GM12878 (cell line): ENCODE measurements at regions of chr2 and their contacts with region 1.

Region 1: DNA sequence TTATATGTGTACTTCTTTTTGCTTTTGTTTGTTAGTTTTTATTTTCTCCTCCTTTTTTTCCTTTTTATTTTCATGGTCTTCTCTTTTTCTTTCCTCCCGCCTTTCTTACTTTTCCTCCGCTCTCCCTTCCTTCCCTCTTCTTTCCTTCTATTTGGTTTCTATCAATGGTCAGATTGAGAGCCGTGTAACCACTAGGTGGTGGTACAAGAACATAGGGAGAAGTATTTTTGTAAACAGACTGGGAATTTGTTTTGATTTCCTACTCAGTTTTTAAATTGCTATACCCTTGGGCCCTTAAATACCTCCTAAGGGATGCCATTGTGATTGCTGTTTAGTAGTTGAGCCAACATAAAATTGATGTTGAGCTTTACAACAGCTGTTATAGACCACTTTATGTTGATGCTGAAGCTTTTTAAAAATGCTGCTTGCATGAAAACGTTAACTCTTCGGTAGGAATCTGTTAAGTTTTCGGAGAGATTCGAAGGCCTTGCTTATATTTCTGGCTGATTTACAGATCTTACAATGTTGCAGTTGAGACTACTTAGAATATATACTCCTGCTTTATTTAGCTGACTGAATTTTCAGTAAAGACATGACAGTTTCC is 124.2 kb downstream of the UBE2E3 start:
- DNase-seq: no peak
- ATAC-seq: no peak; the same call in 2 of the 3 replicates
- H3K4me3 ChIP-seq: no peak overlapping the region
- H3K27ac ChIP-seq: peak overlapping the region; percentile 4; the same call in 1 of the 2 replicates
- H3K4me1 ChIP-seq: peaks cover 25% of the 10 kb centered on the region
- H3K27me3 ChIP-seq: no peaks in the 10 kb centered on the region
- CTCF ChIP-seq: peak; percentile 63 to 67 (median 65)
- EP300 ChIP-seq: no peak
- POLR2A ChIP-seq: no peak
- RAD21 ChIP-seq: peak; percentile 100

Region 2: DNA sequence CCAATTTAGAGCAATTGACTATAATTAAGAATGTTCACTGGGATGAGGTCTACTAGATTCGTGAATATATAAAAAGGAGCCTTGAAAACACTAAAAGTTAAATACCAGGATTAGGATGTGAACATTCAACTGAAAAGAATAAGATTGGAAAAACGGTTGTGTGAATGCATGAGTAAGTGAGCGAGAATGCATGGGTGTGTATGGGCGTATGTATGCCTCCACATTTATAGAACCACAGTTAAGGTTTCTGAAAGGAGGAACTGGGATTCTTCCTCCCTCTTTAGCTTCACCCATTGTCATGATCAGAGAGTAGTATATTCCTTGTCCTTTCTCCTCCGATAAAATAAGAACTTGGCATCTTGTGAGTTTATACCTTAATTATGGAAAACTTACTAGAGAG is 275.4 kb before region 1 on chr2:
- CTCF ChIA-PET with region 1: no interaction called
- POLR2A ChIA-PET with region 1: no interaction called
- RAD21 ChIA-PET with region 1: no interaction called
- SMC1A ChIA-PET with region 1: no interaction called
- in situ Hi-C with region 1: no loop called
- intact Hi-C with region 1: no loop called
- DNase-seq: no peak
- ATAC-seq: no peak
- H3K4me3 ChIP-seq: no peak overlapping the region
- H3K27ac ChIP-seq: no peak overlapping the region
- H3K4me1 ChIP-seq: no peaks in the 10 kb centered on the region
- H3K27me3 ChIP-seq: no peaks in the 10 kb centered on the region
- CTCF ChIP-seq: no peak
- EP300 ChIP-seq: no peak
- POLR2A ChIP-seq: no peak
- RAD21 ChIP-seq: no peak

Region 3: DNA sequence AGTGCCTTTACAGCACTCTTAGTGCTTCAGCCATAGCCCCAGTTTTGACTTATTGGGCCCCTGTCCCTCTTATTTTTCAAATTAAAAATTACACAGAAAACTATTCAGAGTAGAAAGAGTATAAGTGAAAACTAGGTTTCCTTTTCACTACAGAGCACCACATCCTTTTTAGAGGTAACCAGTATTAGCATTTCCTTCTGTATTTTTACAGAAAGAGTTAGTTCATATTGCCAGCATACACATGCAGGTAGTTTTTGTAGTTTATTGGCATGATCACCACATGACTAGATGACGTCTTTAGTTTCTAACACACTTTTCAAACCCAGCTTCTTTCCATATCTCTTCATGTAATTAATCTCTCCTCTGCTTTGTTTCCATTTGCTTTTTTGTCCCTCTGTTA is 57.8 kb before region 1 on chr2:
- CTCF ChIA-PET with region 1: no interaction called
- POLR2A ChIA-PET with region 1: no interaction called
- RAD21 ChIA-PET with region 1: no interaction called
- SMC1A ChIA-PET with region 1: no interaction called
- in situ Hi-C with region 1: no loop called
- intact Hi-C with region 1: no loop called
- DNase-seq: no peak
- ATAC-seq: peak; percentile 41
- H3K4me3 ChIP-seq: no peak overlapping the region
- H3K27ac ChIP-seq: no peak overlapping the region
- H3K4me1 ChIP-seq: no peaks in the 10 kb centered on the region; the same call in 1 of the 2 replicates
- H3K27me3 ChIP-seq: no peaks in the 10 kb centered on the region
- CTCF ChIP-seq: no peak
- EP300 ChIP-seq: no peak
- POLR2A ChIP-seq: no peak
- RAD21 ChIP-seq: no peak

Region 4: GRCh38 chr2:181178823-181179412 is 74.3 kb after region 1 on chr2:
- CTCF ChIA-PET with region 1: interaction called, 10 read pairs
- POLR2A ChIA-PET with region 1: no interaction called
- RAD21 ChIA-PET with region 1: interaction called, 11 read pairs
- SMC1A ChIA-PET with region 1: interaction called, 7 read pairs
- in situ Hi-C with region 1: no loop called
- intact Hi-C with region 1: no loop called
- DNase-seq: no peak
- ATAC-seq: peak; percentile 95
- H3K4me3 ChIP-seq: no peak overlapping the region
- H3K27ac ChIP-seq: no peak overlapping the region
- H3K4me1 ChIP-seq: peaks cover 8% of the 10 kb centered on the region; the same call in 1 of the 2 replicates
- H3K27me3 ChIP-seq: no peaks in the 10 kb centered on the region
- CTCF ChIP-seq: peak in 2 of 3 experiments; percentile 57; a peak in 5 of 6 replicates
- EP300 ChIP-seq: no peak
- POLR2A ChIP-seq: no peak
- RAD21 ChIP-seq: peak; percentile 50; the same call in 1 of the 2 replicates

Region 5: GRCh38 chr2:181305301-181306123 is 200.9 kb after region 1 on chr2:
- CTCF ChIA-PET with region 1: interaction called, 55 read pairs
- POLR2A ChIA-PET with region 1: interaction called, 6 read pairs
- RAD21 ChIA-PET with region 1: interaction called, 54 read pairs
- SMC1A ChIA-PET with region 1: interaction called, 49 read pairs
- in situ Hi-C with region 1: no loop called
- intact Hi-C with region 1: loop called (anchors 2 kb)
- DNase-seq: peak; percentile 96
- ATAC-seq: peak; percentile 80
- H3K4me3 ChIP-seq: no peak overlapping the region
- H3K27ac ChIP-seq: peak overlapping the region; percentile 99
- H3K4me1 ChIP-seq: peaks cover 49% of the 10 kb centered on the region
- H3K27me3 ChIP-seq: no peaks in the 10 kb centered on the region
- CTCF ChIP-seq: no peak
- EP300 ChIP-seq: peak; percentile 16 to 82; a peak in 3 of 4 replicates
- POLR2A ChIP-seq: peak; percentile 75
- RAD21 ChIP-seq: 0 out of 2 replicates have a peak, but pooled peaks have one; percentile 12

Region 6: DNA sequence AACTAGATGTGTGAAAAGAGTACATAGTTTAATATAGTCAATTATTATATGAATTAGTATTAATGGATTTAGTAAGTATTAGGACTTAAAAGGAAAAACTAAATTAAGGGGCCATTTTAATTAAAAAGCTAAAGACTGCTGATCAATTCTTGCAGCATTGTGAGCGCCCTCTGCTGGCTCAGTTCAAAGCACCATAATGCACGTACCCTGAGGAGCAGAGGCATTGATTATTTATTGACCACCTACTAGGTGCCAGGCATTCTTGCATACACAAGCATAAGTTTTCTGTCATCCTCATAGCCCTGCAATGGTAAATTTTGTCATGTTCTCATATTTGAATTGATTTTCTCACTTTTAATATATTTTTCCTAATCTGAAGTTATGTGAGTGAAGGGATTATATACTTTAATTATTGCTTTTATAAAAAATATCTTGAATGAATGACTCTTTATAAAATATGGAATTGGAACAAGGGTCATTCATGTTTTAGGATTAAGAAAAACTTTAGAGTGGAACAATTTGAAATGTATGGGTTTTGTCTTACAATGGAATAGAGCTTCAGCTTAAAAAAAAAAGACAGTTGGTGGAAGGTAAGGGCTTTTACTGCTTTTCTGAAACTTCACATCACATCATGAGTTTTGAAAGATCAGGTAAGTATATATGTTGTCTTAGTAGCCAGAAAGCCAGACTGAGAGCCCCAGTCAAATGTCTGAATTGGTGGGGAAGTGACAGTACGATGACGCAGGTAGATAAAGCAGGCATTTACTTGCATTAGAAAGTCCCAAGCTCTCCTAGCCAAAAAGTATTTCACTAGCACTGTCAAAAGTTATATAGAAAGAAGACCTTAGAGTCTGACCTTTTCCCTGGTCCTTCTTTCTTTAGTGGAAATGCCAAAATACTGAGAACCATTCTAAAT is 362.3 kb after region 1 on chr2:
- CTCF ChIA-PET with region 1: interaction called, 80 read pairs
- POLR2A ChIA-PET with region 1: interaction called, 3 read pairs
- RAD21 ChIA-PET with region 1: interaction called, 43 read pairs
- SMC1A ChIA-PET with region 1: interaction called, 72 read pairs
- in situ Hi-C with region 1: no loop called
- intact Hi-C with region 1: loop called (anchors 1 kb)
- DNase-seq: no peak
- ATAC-seq: peak; percentile 66
- H3K4me3 ChIP-seq: no peak overlapping the region
- H3K27ac ChIP-seq: no peak overlapping the region
- H3K4me1 ChIP-seq: peaks cover 31% of the 10 kb centered on the region
- H3K27me3 ChIP-seq: no peaks in the 10 kb centered on the region
- CTCF ChIP-seq: peak; percentile 74 to 81 (median 79)
- EP300 ChIP-seq: no peak
- POLR2A ChIP-seq: no peak
- RAD21 ChIP-seq: peak; percentile 70

Region 7: GRCh38 chr2:181586569-181587081 is 482.0 kb after region 1 on chr2:
- CTCF ChIA-PET with region 1: interaction called, 11 read pairs
- POLR2A ChIA-PET with region 1: no interaction called
- RAD21 ChIA-PET with region 1: interaction called, 3 read pairs
- SMC1A ChIA-PET with region 1: interaction called, 5 read pairs
- in situ Hi-C with region 1: no loop called
- intact Hi-C with region 1: no loop called
- DNase-seq: peak; percentile 81
- ATAC-seq: peak; percentile 96
- H3K4me3 ChIP-seq: no peak overlapping the region
- H3K27ac ChIP-seq: peak overlapping the region; percentile 12; the same call in 1 of the 2 replicates
- H3K4me1 ChIP-seq: peaks cover 11% of the 10 kb centered on the region
- H3K27me3 ChIP-seq: no peaks in the 10 kb centered on the region
- CTCF ChIP-seq: no peak
- EP300 ChIP-seq: peak; percentile 45 to 68; a peak in 3 of 4 replicates
- POLR2A ChIP-seq: no peak
- RAD21 ChIP-seq: no peak

Region 8: GRCh38 chr2:182077451-182078142 is 973.0 kb after region 1 on chr2:
- CTCF ChIA-PET with region 1: interaction called, 7 read pairs
- POLR2A ChIA-PET with region 1: no interaction called
- RAD21 ChIA-PET with region 1: no interaction called
- SMC1A ChIA-PET with region 1: no interaction called
- in situ Hi-C with region 1: no loop called
- intact Hi-C with region 1: loop called (anchors 10 kb)
- DNase-seq: no peak
- ATAC-seq: peak; percentile 83
- H3K4me3 ChIP-seq: no peak overlapping the region
- H3K27ac ChIP-seq: no peak overlapping the region
- H3K4me1 ChIP-seq: no peaks in the 10 kb centered on the region
- H3K27me3 ChIP-seq: no peaks in the 10 kb centered on the region; a peak in 1 of 4 replicates
- CTCF ChIP-seq: peak; percentile 40 to 59 (median 58); a peak in 5 of 6 replicates
- EP300 ChIP-seq: no peak
- POLR2A ChIP-seq: no peak
- RAD21 ChIP-seq: peak; percentile 86